ENCODE measurements at regions of chr2 and their contacts with region 1.

Region 1: DNA sequence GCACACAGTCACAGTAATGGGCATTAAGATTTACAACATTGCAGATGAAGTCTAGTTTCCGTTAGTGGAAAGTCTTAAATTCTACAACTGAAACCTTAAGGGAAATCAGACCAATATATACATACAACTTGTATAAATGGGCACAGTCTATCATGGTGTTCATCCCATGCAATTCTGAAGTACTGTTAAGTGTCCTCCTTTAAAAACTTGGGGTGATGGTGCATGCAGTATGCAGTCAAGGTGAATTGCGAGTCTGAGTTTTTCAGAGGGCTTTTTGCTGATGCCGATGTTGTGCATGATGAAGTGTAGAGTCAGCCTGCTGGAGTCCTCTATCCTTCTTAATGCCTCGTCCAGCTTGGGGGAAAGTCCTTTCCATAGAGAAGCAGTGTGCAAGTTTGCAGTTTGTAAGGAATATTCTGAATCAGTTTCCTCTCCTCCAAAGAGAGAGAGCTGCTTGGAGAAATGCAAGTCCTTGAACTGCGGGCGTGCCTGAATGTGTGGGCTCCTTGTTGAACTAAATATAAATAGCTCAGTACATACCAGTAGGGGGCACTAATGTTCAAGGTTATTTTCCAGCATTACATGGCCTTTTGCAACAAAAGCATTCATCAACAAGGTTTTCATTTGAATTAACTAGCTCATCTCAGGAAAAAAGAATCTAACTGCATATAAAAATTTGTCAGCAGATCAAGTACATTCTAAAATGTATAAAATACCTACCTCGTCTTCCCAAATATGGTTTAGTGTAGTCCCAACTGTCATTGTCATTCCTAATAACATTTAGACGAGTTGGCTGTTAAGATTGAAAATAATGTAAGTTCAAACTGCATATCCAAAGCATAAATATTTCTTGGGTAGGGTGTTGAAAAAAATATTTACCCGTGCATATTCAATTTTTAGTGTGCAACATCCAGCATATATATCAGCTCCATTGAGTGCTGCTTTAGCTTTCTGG is 21.3 kb downstream of the HNRNPLL start:
- DNase-seq: peak; percentile 58
- ATAC-seq: peak; percentile 85
- H3K4me3 Mint-ChIP-seq: no peak overlapping the region
- H3K27ac Mint-ChIP-seq: peak overlapping the region; percentile 27
- H3K4me1 Mint-ChIP-seq: peaks cover 21% of the 10 kb centered on the region
- H3K27me3 Mint-ChIP-seq: no peaks in the 10 kb centered on the region
- CTCF ChIP-seq: peak; percentile 80

Region 2: DNA sequence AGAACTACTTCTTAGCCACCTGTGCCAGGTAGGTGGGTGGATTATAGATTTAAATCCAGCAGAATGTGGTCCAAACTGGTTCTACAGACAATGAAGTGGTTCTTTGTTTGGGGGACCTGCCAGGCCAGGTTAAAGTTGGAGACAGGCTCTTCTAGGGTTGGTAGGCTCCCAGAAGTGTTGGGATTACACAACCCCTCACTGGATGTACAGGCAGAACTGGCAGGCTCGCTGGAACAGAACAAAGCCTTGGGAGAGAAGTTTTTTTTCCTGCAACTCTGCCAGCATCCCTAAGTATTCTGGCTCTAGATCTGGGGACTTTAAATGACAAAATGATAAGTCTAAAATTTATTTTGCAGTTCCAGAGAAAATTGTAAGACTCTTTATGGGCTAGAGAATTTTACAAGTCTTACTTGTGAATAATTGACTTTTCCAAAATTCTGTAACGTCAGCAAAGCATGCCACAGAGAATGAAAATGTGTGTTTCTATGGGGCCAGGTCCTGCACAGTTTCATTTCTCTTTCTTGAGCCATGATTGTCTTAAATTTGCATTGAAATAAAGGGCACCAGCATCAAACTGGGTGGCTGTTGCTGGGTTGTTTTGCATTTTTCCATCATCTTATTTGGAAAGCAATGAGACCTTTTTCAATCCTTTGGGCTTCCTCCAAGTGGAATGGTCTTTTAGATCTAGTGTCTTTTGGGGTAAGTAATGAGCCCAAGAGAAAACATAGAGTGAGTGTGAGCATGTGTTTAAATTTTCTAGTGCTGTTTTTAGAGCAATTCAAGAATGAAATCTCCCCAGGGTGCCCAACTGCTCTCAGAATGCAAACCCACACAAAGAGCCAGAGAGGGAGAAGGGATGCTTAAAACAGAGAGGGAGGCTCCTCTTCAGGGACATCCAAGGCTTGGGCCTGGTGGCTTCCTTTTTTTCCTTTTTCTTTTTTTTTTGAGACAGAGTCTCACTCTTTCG is 172.0 kb before region 1 on chr2:
- CTCF ChIA-PET with region 1: no interaction called
- POLR2A ChIA-PET with region 1: no interaction called
- intact Hi-C with region 1: no loop called
- DNase-seq: no peak
- ATAC-seq: no peak
- H3K4me3 Mint-ChIP-seq: no peak overlapping the region
- H3K27ac Mint-ChIP-seq: no peak overlapping the region
- H3K4me1 Mint-ChIP-seq: no peaks in the 10 kb centered on the region
- H3K27me3 Mint-ChIP-seq: no peaks in the 10 kb centered on the region
- CTCF ChIP-seq: no peak

Region 3: GRCh38 chr2:38485734-38486133 is 95.7 kb before region 1 on chr2:
- CTCF ChIA-PET with region 1: no interaction called
- POLR2A ChIA-PET with region 1: no interaction called
- intact Hi-C with region 1: no loop called
- DNase-seq: no peak
- ATAC-seq: no peak
- H3K4me3 Mint-ChIP-seq: no peak overlapping the region
- H3K27ac Mint-ChIP-seq: no peak overlapping the region
- H3K4me1 Mint-ChIP-seq: no peaks in the 10 kb centered on the region
- H3K27me3 Mint-ChIP-seq: no peaks in the 10 kb centered on the region
- CTCF ChIP-seq: no peak

Region 4: GRCh38 chr2:38568724-38569436 is 12.6 kb before region 1 on chr2:
- CTCF ChIA-PET with region 1: interaction called, 21 read pairs
- POLR2A ChIA-PET with region 1: interaction called, 3 read pairs
- intact Hi-C with region 1: no loop called
- DNase-seq: no peak
- ATAC-seq: no peak
- H3K4me3 Mint-ChIP-seq: no peak overlapping the region
- H3K27ac Mint-ChIP-seq: no peak overlapping the region
- H3K4me1 Mint-ChIP-seq: peaks cover 10% of the 10 kb centered on the region
- H3K27me3 Mint-ChIP-seq: no peaks in the 10 kb centered on the region
- CTCF ChIP-seq: no peak

Region 5: GRCh38 chr2:38653715-38654527 is 72.5 kb after region 1 on chr2:
- CTCF ChIA-PET with region 1: interaction called, 11 read pairs
- POLR2A ChIA-PET with region 1: no interaction called
- intact Hi-C with region 1: no loop called
- DNase-seq: peak; percentile 93
- ATAC-seq: peak; percentile 83
- H3K4me3 Mint-ChIP-seq: peak overlapping the region; percentile 52
- H3K27ac Mint-ChIP-seq: peak overlapping the region; percentile 88
- H3K4me1 Mint-ChIP-seq: peaks cover 49% of the 10 kb centered on the region
- H3K27me3 Mint-ChIP-seq: no peaks in the 10 kb centered on the region
- CTCF ChIP-seq: no peak

Region 6: GRCh38 chr2:38682008-38682575 is 100.6 kb after region 1 on chr2:
- CTCF ChIA-PET with region 1: interaction called, 13 read pairs
- POLR2A ChIA-PET with region 1: no interaction called
- intact Hi-C with region 1: no loop called
- DNase-seq: no peak
- ATAC-seq: peak; percentile 60
- H3K4me3 Mint-ChIP-seq: peak overlapping the region; percentile 22
- H3K27ac Mint-ChIP-seq: peak overlapping the region; percentile 75
- H3K4me1 Mint-ChIP-seq: peaks cover 37% of the 10 kb centered on the region
- H3K27me3 Mint-ChIP-seq: no peaks in the 10 kb centered on the region
- CTCF ChIP-seq: no peak

Region 7: GRCh38 chr2:38709567-38710194 is 128.2 kb after region 1 on chr2:
- CTCF ChIA-PET with region 1: interaction called, 13 read pairs
- POLR2A ChIA-PET with region 1: no interaction called
- intact Hi-C with region 1: no loop called
- DNase-seq: peak; percentile 69
- ATAC-seq: peak; percentile 78
- H3K4me3 Mint-ChIP-seq: peak overlapping the region; percentile 32
- H3K27ac Mint-ChIP-seq: peak overlapping the region; percentile 87
- H3K4me1 Mint-ChIP-seq: peaks cover 67% of the 10 kb centered on the region
- H3K27me3 Mint-ChIP-seq: no peaks in the 10 kb centered on the region
- CTCF ChIP-seq: no peak

Region 8: GRCh38 chr2:38740851-38741731 is 159.6 kb after region 1 on chr2:
- CTCF ChIA-PET with region 1: interaction called, 95 read pairs
- POLR2A ChIA-PET with region 1: interaction called, 16 read pairs
- intact Hi-C with region 1: no loop called
- DNase-seq: no peak
- ATAC-seq: no peak
- H3K4me3 Mint-ChIP-seq: no peak overlapping the region
- H3K27ac Mint-ChIP-seq: peak overlapping the region; percentile 28
- H3K4me1 Mint-ChIP-seq: peaks cover 46% of the 10 kb centered on the region
- H3K27me3 Mint-ChIP-seq: no peaks in the 10 kb centered on the region
- CTCF ChIP-seq: peak; percentile 87

Measured in activated CD8-positive, alpha-beta T cell treated with anti-CD3 and anti-CD28 coated beads for 36 hours (primary cell).